Activated CD4-positive, alpha-beta memory T cell treated with anti-CD3 and anti-CD28 coated beads, Interleukin-2, amount 10 ng/mL, durations not matched to agents 7 days and 5 days (primary cell): ENCODE measurements at regions of chr20 and their contacts with region 1.

Region 1: GRCh38 chr20:58179432-58180099 is 48.9 kb downstream of the ANKRD60 start:
- DNase-seq: peak; percentile 66
- H3K4me3 Mint-ChIP-seq: no peak overlapping the region
- H3K27ac Mint-ChIP-seq: no peak overlapping the region
- H3K4me1 Mint-ChIP-seq: peaks cover 4% of the 10 kb centered on the region
- H3K27me3 Mint-ChIP-seq: peaks cover 16% of the 10 kb centered on the region

Region 2: DNA sequence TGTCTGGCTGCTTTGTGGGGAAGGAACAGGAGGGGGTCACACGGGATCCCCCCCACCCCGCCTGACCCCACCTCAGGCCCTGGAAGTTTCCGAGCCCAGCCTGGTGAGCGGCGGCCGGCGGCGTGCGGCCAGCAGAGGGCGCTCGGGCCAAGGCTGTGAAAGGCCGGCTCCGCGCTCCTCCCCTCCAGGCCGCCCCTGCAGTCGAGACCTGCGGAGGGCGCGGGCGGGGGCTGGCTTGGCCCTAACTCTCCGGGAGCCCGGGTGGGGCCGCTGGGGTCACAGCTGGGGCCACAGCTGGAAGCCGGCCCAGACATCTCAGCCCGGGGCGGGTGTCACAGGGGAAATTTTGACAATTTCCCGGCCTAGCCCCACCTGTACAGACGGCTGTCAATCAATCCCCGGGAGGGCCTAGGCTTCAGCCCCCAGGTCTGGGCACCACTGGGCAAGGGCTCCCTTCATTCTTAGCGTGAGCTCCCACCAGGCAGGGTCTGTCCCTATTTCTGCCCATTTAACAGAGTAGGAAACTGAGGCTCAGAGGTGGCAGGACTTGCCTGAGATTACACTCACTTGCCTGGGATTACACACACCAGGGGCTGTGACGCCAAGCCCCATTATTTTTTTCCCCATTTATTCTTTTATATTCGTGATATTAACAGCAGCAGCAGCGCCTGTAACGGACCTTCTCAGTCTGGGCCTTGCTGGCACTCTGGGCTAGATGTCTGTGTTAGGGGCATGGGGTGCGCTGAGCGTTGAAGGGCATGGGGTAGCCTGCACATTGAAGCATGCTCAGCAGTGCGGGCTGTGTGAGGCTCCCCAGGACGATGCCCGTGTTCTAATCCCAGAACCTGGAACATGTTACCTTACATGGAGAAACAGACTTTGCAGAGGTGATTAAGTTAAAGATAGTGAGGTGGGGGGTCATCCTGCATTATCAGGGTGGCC is 582.3 kb before region 1 on chr20:
- CTCF ChIA-PET with region 1: interaction called, 10 read pairs
- POLR2A ChIA-PET with region 1: no interaction called
- DNase-seq: peak; percentile 72
- H3K4me3 Mint-ChIP-seq: no peak overlapping the region
- H3K27ac Mint-ChIP-seq: no peak overlapping the region
- H3K4me1 Mint-ChIP-seq: peaks cover 17% of the 10 kb centered on the region
- H3K27me3 Mint-ChIP-seq: peaks cover 36% of the 10 kb centered on the region

Region 3: GRCh38 chr20:58246346-58246745 is 66.8 kb after region 1 on chr20:
- CTCF ChIA-PET with region 1: no interaction called
- POLR2A ChIA-PET with region 1: no interaction called
- DNase-seq: no peak
- H3K4me3 Mint-ChIP-seq: no peak overlapping the region
- H3K27ac Mint-ChIP-seq: no peak overlapping the region
- H3K4me1 Mint-ChIP-seq: no peaks in the 10 kb centered on the region
- H3K27me3 Mint-ChIP-seq: no peaks in the 10 kb centered on the region